WTC11 (cell line): ENCODE measurements at regions of chr15 and their contacts with region 1.

Region 1: DNA sequence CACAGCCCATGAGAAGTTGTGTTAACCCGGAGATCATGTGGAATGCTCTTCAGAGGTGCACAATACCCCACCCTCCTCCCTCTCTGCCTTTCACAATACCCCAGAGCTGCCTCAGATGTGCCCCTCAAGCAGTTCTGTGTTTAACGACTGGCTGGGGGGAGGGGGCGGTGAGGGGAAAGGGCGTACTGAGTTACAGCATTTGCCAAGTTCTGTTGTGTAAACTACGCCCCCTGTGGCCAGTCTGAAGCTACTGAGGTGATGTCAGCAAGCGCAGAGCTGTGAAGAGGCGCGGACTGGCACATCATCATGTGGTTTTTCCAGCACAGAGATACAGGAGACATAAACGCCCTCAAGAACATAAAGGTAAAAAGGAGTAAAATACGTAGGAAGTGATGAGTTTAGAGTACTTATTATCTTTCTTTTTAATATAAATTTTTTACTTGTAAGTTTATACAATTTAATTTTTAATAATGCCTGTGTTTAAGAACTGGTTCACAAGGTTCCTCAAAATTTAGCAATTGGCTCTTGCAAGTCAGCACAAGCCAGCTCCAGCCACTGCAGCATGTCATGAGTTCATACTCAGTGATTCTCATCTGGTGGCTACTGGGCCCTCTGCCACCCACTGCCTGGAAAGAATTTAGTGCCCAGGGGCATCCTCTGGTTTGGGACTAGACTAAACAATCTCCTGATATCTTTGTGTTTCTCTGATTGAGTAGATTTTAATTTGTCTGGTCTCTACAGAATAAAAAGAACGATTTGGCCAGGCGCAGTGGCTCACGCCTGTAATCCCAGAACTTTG is 1.7 kb downstream of the EPB42 start:
- DNase-seq: peak; percentile 80
- ATAC-seq: peak; percentile 96
- H3K4me3 Mint-ChIP-seq: no peak overlapping the region
- H3K27ac Mint-ChIP-seq: no peak overlapping the region
- H3K4me1 Mint-ChIP-seq: peaks cover 8% of the 10 kb centered on the region
- H3K27me3 Mint-ChIP-seq: no peaks in the 10 kb centered on the region; the same call in 1 of the 2 replicates
- CTCF ChIP-seq: peak; percentile 67

Region 2: GRCh38 chr15:42973114-42973513 is 246.0 kb before region 1 on chr15:
- CTCF ChIA-PET with region 1: no interaction called
- POLR2A ChIA-PET with region 1: no interaction called
- DNase-seq: no peak
- ATAC-seq: no peak
- H3K4me3 Mint-ChIP-seq: no peak overlapping the region
- H3K27ac Mint-ChIP-seq: no peak overlapping the region
- H3K4me1 Mint-ChIP-seq: no peaks in the 10 kb centered on the region
- H3K27me3 Mint-ChIP-seq: no peaks in the 10 kb centered on the region
- CTCF ChIP-seq: no peak

Region 3: GRCh38 chr15:43107751-43108150 is 111.4 kb before region 1 on chr15:
- CTCF ChIA-PET with region 1: no interaction called
- POLR2A ChIA-PET with region 1: no interaction called
- DNase-seq: no peak
- ATAC-seq: no peak
- H3K4me3 Mint-ChIP-seq: no peak overlapping the region
- H3K27ac Mint-ChIP-seq: no peak overlapping the region
- H3K4me1 Mint-ChIP-seq: peaks cover 11% of the 10 kb centered on the region
- H3K27me3 Mint-ChIP-seq: peaks cover 10% of the 10 kb centered on the region
- CTCF ChIP-seq: no peak

Region 4: DNA sequence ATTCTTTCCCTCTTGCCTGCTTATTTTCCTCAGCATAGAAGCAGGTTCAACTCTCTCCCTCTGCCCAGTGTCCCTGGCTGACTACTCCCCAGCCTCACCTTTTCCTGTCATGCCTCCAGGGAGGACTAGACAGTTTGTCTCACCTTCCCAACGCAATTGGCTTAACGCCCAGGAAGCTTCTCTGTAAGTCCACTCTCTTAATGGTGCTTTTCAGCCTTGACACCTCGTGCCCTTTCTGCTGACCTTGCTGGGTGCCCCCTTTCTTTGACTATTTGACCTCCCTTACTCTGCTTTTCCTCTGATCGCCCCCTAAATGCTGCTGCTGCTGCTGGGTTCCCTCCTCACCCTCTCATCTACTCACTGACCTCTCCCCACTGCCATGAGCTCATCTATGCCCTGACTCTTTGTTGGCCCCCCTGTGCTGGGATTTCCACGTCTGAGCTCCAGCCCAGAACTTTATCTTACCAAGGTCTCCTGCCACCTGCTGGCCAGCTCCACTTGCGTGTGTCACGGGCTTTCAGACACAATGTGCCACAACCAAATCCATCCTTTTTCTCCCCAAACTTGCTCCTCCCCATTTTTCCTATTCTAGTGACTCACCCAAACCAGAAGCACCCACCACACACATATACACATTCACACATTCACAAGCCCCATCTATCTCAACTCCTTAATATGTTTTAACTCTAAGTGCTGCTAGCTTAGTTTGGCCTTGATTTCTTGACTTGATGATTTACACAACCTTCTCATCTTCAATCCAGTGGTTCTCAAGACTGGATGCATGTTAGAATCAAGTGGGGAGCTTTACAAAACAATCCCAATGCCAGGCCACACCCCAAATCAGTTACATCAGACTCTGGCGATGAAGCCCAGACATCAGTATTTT is 14.8 kb before region 1 on chr15:
- CTCF ChIA-PET with region 1: interaction called, 35 read pairs
- POLR2A ChIA-PET with region 1: no interaction called
- DNase-seq: peak; percentile 67
- ATAC-seq: peak; percentile 64
- H3K4me3 Mint-ChIP-seq: no peak overlapping the region
- H3K27ac Mint-ChIP-seq: no peak overlapping the region
- H3K4me1 Mint-ChIP-seq: peaks cover 5% of the 10 kb centered on the region
- H3K27me3 Mint-ChIP-seq: no peaks in the 10 kb centered on the region; the same call in 1 of the 2 replicates
- CTCF ChIP-seq: peak; percentile 47; the same call in 1 of the 2 replicates

Region 5: DNA sequence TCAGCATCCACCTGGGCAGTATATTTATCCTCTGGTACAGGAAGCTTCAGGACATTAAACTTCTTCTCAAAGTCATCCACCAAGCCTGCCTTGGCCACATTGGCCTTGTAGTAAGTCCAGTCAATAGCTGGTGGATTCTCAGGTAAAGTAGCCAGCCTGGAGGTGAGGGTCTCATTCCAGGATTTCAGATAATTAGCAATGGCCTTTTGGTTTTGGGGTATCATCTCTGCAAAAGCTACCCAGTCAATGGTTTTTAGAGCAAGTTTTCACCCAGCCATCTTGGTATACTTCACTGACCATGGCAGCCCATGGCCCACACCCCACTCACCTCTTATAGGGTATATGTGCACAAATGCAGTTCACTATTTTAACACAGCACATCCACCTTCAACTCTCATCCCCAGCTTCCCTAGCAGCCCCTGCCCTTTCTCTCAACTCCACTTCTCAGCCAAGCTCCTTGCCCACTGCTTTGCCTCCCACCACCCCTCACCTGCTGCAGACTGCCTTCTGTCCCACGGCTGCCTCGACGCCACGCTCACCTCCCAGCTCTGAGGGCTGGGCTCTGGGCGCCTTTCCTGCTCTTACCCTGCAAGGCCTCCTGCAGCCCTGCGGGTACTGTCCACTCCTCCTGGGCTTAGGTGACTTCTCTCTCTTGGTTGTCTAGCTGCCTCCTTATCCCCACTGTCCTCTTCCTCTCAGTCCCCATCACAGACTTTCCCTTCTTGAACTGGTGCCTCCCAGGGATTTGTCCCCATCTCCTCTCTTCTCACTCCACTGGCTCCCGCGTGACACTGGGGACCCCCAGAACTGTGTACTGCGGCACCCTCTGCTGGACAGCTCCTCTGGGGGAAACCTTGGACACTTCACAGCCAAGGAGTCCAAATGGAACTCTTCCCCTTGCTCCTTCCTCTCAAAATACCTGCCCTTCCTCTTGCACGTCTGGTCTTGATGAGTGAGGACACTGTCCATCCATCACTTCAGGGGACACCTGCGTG is 49.3 kb after region 1 on chr15:
- CTCF ChIA-PET with region 1: interaction called, 10 read pairs
- POLR2A ChIA-PET with region 1: no interaction called
- DNase-seq: peak; percentile 75
- ATAC-seq: peak; percentile 88
- H3K4me3 Mint-ChIP-seq: no peak overlapping the region
- H3K27ac Mint-ChIP-seq: no peak overlapping the region
- H3K4me1 Mint-ChIP-seq: no peaks in the 10 kb centered on the region
- H3K27me3 Mint-ChIP-seq: peaks cover 3% of the 10 kb centered on the region; the same call in 1 of the 2 replicates
- CTCF ChIP-seq: no peak

Region 6: GRCh38 chr15:43285609-43286037 is 66.5 kb after region 1 on chr15:
- CTCF ChIA-PET with region 1: interaction called, 14 read pairs
- POLR2A ChIA-PET with region 1: no interaction called
- DNase-seq: peak; percentile 36
- ATAC-seq: peak; percentile 73
- H3K4me3 Mint-ChIP-seq: no peak overlapping the region
- H3K27ac Mint-ChIP-seq: no peak overlapping the region
- H3K4me1 Mint-ChIP-seq: no peaks in the 10 kb centered on the region
- H3K27me3 Mint-ChIP-seq: peaks cover 2% of the 10 kb centered on the region
- CTCF ChIP-seq: peak; percentile 63

Region 7: DNA sequence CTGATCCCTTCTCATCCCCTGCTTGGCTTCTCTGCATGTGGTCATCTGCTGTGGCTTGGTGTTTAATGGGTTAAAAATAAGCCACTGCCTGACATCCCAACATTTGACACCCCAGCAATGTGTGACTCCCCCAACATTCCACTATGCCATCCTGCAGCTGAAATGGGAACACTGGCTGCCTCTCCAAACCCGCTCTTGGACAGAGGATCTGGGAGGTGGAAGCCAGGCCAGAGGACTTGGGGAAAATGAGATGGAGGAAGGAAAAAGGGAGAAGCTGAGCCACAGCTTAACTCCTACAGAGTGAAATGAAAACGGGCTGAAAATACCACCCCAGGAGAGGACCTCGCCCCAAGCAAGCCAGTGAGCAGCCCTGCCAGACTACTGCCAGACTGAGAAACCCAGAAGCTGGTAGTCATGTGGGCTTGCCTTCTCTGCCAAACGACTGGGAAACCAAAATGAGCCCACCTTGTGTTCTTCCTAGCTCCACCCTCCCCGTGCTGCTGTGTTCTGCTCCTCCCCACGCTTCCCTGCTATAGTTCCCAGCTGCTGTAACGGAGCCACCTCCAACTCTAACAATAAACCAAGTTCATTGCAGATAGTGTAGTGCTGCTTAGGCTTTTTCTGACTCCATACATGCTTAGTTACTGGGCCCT is 312.0 kb after region 1 on chr15:
- CTCF ChIA-PET with region 1: no interaction called
- POLR2A ChIA-PET with region 1: no interaction called
- DNase-seq: no peak
- ATAC-seq: peak; percentile 72
- H3K4me3 Mint-ChIP-seq: no peak overlapping the region
- H3K27ac Mint-ChIP-seq: no peak overlapping the region
- H3K4me1 Mint-ChIP-seq: peaks cover 21% of the 10 kb centered on the region
- H3K27me3 Mint-ChIP-seq: no peaks in the 10 kb centered on the region; the same call in 1 of the 2 replicates
- CTCF ChIP-seq: no peak